ENCODE measurements at regions of chr1 and their contacts with region 1.

Region 1: GRCh38 chr1:232704694-232705680 is 75.1 kb upstream of the SIPA1L2 start:
- DNase-seq: peak in 5 of 10 donors; percentile 30 to 77 (median 49)
- H3K4me3 ChIP-seq: peak overlapping the region in 6 of 59 donors; percentile 4 to 28 (median 20)
- H3K27ac ChIP-seq: peak overlapping the region; percentile 19 to 93 (median 77)
- H3K27me3 ChIP-seq: no peaks in the 10 kb centered on the region
- CTCF ChIP-seq: peak in 1 of 56 donors; percentile 11

Region 2: GRCh38 chr1:232635778-232636356 is 69.1 kb before region 1 on chr1:
- intact Hi-C with region 1: loop called in 1 of 2 experiments (anchors 5 kb)
- DNase-seq: no peak
- H3K4me3 ChIP-seq: peak overlapping the region in 1 of 59 donors; percentile 4
- H3K27ac ChIP-seq: no peak overlapping the region
- H3K27me3 ChIP-seq: no peaks in the 10 kb centered on the region
- CTCF ChIP-seq: peak; percentile 68 to 97 (median 87)

Region 3: GRCh38 chr1:232655028-232655747 is 49.8 kb before region 1 on chr1:
- intact Hi-C with region 1: no loop called
- DNase-seq: no peak
- H3K4me3 ChIP-seq: no peak overlapping the region
- H3K27ac ChIP-seq: no peak overlapping the region
- H3K27me3 ChIP-seq: peaks cover 0 to 4% (median 0%) of the 10 kb centered on the region in 45 donors
- CTCF ChIP-seq: no peak

Region 4: GRCh38 chr1:232805269-232806185 is 100.5 kb after region 1 on chr1 and contains the start of gene MAP10:
- intact Hi-C with region 1: loop called in 1 of 2 experiments (anchors 5 kb)
- DNase-seq: peak; percentile 42 to 79 (median 70)
- H3K4me3 ChIP-seq: peak within 1 kb of the TSS; percentile 48 to 92 (median 79)
- H3K27ac ChIP-seq: peak within 1 kb of the TSS; percentile 27 to 97 (median 92)
- H3K27me3 ChIP-seq: no peaks in the 10 kb centered on the region
- CTCF ChIP-seq: peak in 6 of 56 donors; percentile 8 to 29 (median 19)
- total RNA-seq, gene MAP10: 1.3 to 7.8 (median 4.4) TPM

Measured in dorsolateral prefrontal cortex (tissue), 120 donors.